Mammary epithelial cell (primary cell): ENCODE measurements at regions of chr12 and their contacts with region 1.

Region 1: GRCh38 chr12:57039016-57039798 is 10.7 kb downstream of the MYO1A start:
- DNase-seq: no peak
- H3K4me3 ChIP-seq: no peak overlapping the region
- H3K27ac ChIP-seq: no peak overlapping the region
- H3K4me1 ChIP-seq: no peaks in the 10 kb centered on the region
- H3K27me3 ChIP-seq: peaks cover 3% of the 10 kb centered on the region
- CTCF ChIP-seq: no peak

Region 2: DNA sequence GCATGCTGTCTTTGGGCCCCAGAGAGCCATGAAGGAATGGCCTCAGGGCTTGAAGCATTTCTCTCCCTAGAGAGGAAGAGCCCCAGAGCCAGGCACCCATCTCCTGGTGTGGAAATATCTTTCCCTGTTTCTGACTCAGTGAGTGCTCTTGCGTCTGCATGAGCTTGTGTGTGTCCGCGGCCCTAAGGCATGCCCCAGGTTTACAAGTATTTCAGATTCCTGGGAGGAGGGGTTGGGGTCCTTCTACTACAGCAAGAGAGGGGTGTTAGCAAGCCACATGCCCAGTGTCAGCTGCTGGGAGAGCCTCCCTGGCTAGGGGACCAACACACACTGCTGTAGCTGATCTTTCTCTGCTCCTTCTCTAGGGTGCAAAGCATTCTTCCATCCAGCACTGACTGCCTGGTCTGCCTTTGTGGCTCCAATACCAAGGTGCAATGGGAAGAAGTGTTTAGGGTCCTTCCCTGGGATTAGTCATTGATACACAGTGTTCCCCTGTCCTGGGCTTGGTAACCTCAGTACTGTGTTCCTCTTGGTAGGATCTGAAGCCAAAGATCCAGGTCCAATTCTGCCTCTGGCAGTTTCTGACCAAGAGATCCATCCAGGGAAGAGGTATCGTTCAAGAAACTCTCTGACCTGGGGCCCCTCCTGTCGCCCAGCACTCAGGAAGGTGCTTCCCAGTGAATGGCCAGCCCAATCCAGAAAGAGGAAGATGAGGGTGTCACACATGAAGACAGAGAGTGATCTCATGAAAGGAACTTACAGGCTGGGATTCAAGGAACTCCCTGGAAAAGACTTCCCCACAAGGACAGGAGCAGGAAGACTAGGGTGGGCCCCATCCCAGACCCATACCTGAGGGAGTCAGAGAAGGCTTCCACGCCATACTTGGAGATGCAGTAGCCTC is 84.9 kb before region 1 on chr12:
- CTCF ChIA-PET with region 1: no interaction called
- dilution Hi-C with region 1: loop called (anchors 5 kb)
- in situ Hi-C with region 1: no loop called
- intact Hi-C with region 1: no loop called
- DNase-seq: no peak
- H3K4me3 ChIP-seq: no peak overlapping the region
- H3K27ac ChIP-seq: no peak overlapping the region
- H3K4me1 ChIP-seq: peaks cover 18% of the 10 kb centered on the region
- H3K27me3 ChIP-seq: no peaks in the 10 kb centered on the region
- CTCF ChIP-seq: no peak

Region 3: DNA sequence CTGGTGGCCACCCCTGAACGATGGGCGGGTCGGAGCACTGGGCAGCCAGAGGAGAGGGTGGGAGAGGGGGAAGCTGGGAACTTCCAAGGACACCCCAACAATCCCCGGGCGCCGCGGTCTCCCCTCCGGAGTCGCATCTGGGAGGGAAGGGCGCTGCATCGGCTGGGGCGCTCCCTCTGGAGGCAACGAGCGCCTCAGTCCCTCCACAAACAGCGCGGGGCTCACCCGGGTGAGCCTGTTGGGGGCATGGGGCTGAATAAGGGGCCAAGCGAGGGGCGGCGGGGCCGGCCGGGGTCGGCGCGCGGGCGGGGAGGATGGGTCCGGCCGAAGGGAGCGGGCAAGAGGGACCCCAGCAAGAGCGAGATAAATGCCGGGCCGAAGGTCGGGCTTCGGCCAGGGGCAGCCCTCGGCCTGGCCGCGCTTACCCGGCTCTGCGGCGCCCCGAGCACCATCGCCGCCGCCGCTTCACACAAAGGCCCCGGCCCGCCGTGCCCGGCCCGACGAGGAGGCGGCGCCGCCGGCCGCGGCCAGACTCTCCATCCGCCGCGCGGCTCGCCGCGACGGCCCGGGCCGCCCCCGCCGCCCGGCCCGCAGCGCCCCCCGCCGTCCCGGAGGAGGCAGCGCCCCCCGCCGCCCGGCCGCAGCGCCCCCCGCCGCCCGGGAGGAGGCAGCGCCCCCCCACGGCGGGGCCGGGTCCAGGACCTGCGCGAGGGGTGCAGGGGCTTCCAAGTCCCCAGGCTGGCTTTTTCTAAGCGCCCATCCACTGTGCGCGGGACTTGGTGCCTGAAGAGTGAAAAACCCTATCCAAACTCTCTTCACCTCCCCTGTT is 33.0 kb before region 1 on chr12 and contains the start of gene ZBTB39:
- CTCF ChIA-PET with region 1: no interaction called
- dilution Hi-C with region 1: no loop called
- in situ Hi-C with region 1: no loop called
- intact Hi-C with region 1: no loop called
- DNase-seq: peak; percentile 42
- H3K4me3 ChIP-seq: peak within 1 kb of the TSS; percentile 72 to 76 (median 73)
- H3K27ac ChIP-seq: no peak within 1 kb of the TSS
- H3K4me1 ChIP-seq: peaks cover 5% of the 10 kb centered on the region
- H3K27me3 ChIP-seq: no peaks in the 10 kb centered on the region
- CTCF ChIP-seq: peak; percentile 8 to 54
- total RNA-seq, gene ZBTB39: 5.7 to 8.0 TPM

Region 4: GRCh38 chr12:57111031-57111734 is 72.0 kb after region 1 on chr12 and contains the start of gene STAT6:
- CTCF ChIA-PET with region 1: no interaction called
- dilution Hi-C with region 1: no loop called
- in situ Hi-C with region 1: no loop called
- intact Hi-C with region 1: no loop called
- DNase-seq: peak; percentile 82
- H3K4me3 ChIP-seq: peak within 1 kb of the TSS; percentile 62 to 68 (median 67)
- H3K27ac ChIP-seq: peak within 1 kb of the TSS; percentile 95
- H3K4me1 ChIP-seq: peaks cover 31% of the 10 kb centered on the region
- H3K27me3 ChIP-seq: no peaks in the 10 kb centered on the region
- CTCF ChIP-seq: no peak
- total RNA-seq, gene STAT6: 65.3 to 150 TPM

Region 5: DNA sequence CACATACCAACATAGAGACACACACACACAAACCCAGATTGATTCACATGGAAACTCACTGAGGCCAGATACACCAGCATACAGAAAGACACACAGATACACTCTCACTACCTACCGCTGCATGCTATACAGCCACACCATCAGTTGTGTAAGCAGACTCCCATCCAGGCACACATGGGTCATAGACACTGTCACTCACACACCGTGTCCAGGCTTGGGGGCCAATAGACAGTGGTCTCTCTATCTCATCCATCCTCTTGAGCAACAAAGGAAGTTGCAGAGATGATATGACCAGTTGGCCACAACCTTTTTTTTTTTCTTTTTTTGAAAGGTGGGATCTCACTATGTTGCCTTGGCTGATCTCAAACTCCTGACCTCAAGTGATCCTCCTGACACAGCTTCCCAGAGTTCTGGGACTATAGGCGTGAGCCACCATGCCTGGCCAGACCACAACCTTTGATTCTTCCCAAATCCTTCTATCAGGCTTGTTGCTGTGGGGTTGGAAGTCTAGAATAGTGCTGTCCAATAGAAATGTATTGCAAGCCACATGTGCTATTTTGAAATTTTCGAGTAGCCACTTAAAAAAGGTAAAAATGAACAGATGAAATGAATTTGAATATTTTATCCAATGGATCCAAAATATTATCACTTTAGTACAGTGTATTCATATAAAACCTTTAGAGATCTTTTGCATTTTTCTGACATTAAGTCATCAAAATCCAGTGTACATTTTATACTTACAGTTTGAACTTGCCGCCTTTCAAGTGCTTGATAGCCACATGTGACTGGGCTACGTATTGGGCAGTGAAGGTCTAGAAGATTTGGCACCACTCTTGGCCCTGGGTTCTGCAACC is 100.8 kb after region 1 on chr12:
- CTCF ChIA-PET with region 1: no interaction called
- dilution Hi-C with region 1: loop called (anchors 5 kb)
- in situ Hi-C with region 1: no loop called
- intact Hi-C with region 1: no loop called
- DNase-seq: no peak
- H3K4me3 ChIP-seq: no peak overlapping the region
- H3K27ac ChIP-seq: no peak overlapping the region
- H3K4me1 ChIP-seq: no peaks in the 10 kb centered on the region
- H3K27me3 ChIP-seq: no peaks in the 10 kb centered on the region
- CTCF ChIP-seq: no peak